Heart right ventricle (tissue), 16 donors: ENCODE measurements at regions of chr13 and their contacts with region 1.

Region 1: GRCh38 chr13:27362064-27362883 is 62.1 kb upstream of the GTF3A start:
- DNase-seq: peak; percentile 82 to 88
- ATAC-seq: peak; percentile 92 to 97 (median 95)
- H3K4me3 ChIP-seq: peak overlapping the region; percentile 29 to 61 (median 51)
- H3K27ac ChIP-seq: no peak overlapping the region
- H3K4me1 ChIP-seq: peaks cover 0 to 10% (median 5%) of the 10 kb centered on the region in 9 donors
- H3K27me3 ChIP-seq: peaks cover 0 to 17% (median 6%) of the 10 kb centered on the region in 7 donors
- CTCF ChIP-seq: peak; percentile 87 to 97 (median 95)

Region 2: GRCh38 chr13:26325876-26326275 is 1036.4 kb before region 1 on chr13:
- intact Hi-C with region 1: no loop called
- DNase-seq: no peak
- ATAC-seq: peak in 7 of 8 donors; percentile 34 to 80 (median 75)
- H3K4me3 ChIP-seq: no peak overlapping the region
- H3K27ac ChIP-seq: peak overlapping the region in 5 of 10 donors; percentile 27 to 61 (median 28)
- H3K4me1 ChIP-seq: peaks cover 3 to 53% (median 39%) of the 10 kb centered on the region in 9 donors
- H3K27me3 ChIP-seq: no peaks in the 10 kb centered on the region
- CTCF ChIP-seq: no peak

Region 3: GRCh38 chr13:26946684-26947343 is 415.5 kb before region 1 on chr13:
- intact Hi-C with region 1: loop called in 7 of 10 experiments (anchors 1 to 5 kb)
- DNase-seq: no peak
- ATAC-seq: peak in 7 of 8 donors; percentile 65 to 84 (median 72)
- H3K4me3 ChIP-seq: no peak overlapping the region
- H3K27ac ChIP-seq: no peak overlapping the region
- H3K4me1 ChIP-seq: peaks cover 0 to 14% (median 0%) of the 10 kb centered on the region in 9 donors
- H3K27me3 ChIP-seq: no peaks in the 10 kb centered on the region
- CTCF ChIP-seq: peak; percentile 65 to 82 (median 76)

Region 4: DNA sequence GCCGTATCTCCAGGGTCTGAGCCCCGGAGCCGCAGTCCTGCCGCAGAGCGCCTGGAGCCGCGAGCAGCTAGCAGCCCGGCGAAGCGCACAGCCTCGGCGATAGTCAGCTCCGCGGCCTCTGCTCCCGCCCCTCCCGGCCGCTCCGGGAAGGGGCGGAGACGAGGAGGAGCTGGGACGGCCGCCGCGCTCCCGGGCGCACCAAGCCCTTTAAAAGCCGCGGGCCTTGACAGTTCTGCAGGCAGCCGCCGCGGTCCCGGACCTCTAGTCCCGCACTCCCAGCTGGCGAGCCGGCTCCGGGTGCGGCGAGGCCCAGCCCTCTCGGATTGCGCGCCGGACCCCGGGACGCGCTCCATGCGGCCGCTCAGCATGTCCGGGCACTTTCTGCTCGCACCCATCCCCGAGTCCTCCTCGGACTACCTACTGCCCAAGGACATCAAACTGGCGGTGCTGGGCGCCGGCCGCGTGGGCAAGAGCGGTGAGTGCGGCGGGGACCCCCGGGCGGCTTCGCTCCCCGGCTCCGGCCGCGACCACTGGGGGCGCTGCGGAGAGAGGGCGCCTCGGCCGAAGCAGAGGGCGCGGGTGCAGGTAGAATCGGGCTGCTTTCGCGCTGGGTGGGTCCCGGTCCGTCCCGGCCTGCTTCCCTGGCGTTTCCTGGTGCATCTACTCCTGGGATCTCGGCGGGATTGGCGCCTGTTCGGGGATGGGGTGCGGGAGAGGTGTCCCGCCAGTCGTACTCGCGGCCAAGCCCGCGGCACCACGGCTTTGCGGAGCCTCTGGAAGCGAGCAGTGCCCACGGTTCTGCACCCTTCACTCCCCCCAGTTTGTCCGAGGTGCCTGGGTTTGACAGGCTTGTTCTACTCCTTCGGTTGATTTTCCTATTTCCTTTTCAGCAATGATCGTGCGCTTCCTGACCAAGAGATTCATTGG is 91.4 kb before region 1 on chr13 and contains the start of gene RASL11A:
- intact Hi-C with region 1: loop called in 1 of 10 experiments (anchors 10 kb)
- DNase-seq: peak; percentile 85 to 90
- ATAC-seq: peak; percentile 93 to 95 (median 94)
- H3K4me3 ChIP-seq: peak within 1 kb of the TSS; percentile 50 to 91 (median 78)
- H3K27ac ChIP-seq: peak within 1 kb of the TSS; percentile 79 to 95 (median 92)
- H3K4me1 ChIP-seq: peaks cover 0 to 68% (median 33%) of the 10 kb centered on the region in 9 donors
- H3K27me3 ChIP-seq: no peaks in the 10 kb centered on the region
- CTCF ChIP-seq: peak; percentile 91 to 99 (median 97)
- total RNA-seq, gene RASL11A: 1.8 to 68.7 (median 3.1) TPM

Region 5: DNA sequence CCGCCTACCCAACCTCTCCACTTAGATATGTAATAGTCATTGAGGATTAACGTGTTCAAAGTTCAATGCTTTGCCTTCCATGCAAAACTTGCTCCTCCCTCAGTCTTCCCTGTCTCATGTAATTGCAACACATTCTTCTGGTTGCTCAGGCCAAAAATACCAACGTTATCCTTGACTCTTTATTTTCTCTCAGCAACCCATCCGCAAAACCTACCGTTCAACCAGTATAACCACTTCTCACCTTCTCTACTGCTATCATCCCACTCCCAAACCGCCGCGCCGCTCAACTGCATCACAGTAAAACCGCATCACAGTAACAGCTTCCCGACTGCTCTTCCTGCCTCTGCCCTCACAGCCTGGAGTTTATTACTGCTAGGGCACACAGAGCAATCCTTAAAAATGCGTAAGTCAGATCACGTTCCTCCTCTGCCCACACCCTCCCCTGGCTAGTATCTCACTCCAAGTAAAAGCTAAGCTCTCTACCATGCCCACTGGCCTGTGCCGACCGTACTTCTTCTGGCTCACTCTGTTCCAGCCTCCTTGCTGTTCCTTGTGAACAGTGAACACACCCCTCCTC is 79.9 kb after region 1 on chr13:
- intact Hi-C with region 1: no loop called
- DNase-seq: no peak
- ATAC-seq: peak in 4 of 8 donors; percentile 10 to 55 (median 32)
- H3K4me3 ChIP-seq: no peak overlapping the region
- H3K27ac ChIP-seq: no peak overlapping the region
- H3K4me1 ChIP-seq: peaks cover 0 to 43% (median 27%) of the 10 kb centered on the region in 9 donors
- H3K27me3 ChIP-seq: no peaks in the 10 kb centered on the region
- CTCF ChIP-seq: no peak

Region 6: GRCh38 chr13:27728271-27728670 is 366.0 kb after region 1 on chr13:
- intact Hi-C with region 1: loop called in 1 of 10 experiments (anchors 10 kb)
- DNase-seq: no peak
- ATAC-seq: no peak
- H3K4me3 ChIP-seq: no peak overlapping the region
- H3K27ac ChIP-seq: no peak overlapping the region
- H3K4me1 ChIP-seq: no peaks in the 10 kb centered on the region
- H3K27me3 ChIP-seq: peaks cover 0 to 16% (median 3%) of the 10 kb centered on the region in 7 donors
- CTCF ChIP-seq: no peak

Region 7: DNA sequence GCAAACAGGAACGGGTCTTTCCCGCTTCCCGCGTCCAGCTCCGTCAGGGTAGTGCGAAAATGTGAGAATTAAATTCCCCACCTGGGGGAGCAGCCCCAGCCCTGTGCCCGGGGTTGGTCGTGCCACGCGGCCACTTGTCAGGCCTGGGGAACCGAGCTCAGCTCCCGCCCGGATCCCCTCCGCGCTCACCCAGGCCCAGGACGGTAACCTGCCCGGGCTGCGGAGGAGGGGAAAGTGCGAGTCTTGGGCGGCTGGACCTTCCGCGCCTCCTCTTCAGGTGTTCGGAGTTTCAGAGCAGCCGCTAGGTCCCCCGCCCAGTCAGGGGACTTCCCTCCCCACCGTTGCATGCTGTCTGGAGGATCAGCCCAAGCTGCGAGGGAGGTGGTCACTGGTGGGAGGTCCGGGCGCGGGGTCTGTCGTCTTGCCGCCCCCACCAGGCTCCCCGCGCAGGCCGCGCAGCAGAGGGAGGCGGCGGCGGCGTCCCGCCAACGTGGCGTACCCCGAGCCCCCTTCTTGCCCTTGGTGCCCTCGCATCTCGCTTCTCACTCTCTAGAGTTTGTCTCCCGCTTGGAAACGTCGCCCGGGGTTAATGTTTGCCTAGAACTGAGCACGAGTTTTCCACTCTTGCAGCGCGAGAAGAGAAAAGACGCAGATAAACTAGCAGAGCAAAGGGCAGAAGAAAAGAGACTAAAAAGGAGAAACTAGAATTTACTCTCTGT is 618.2 kb after region 1 on chr13:
- intact Hi-C with region 1: loop called in 8 of 10 experiments (anchors 1 to 5 kb)
- DNase-seq: no peak
- ATAC-seq: no peak
- H3K4me3 ChIP-seq: no peak overlapping the region
- H3K27ac ChIP-seq: no peak overlapping the region
- H3K4me1 ChIP-seq: peaks cover 0 to 37% (median 26%) of the 10 kb centered on the region in 9 donors
- H3K27me3 ChIP-seq: peaks cover 64 to 99% (median 97%) of the 10 kb centered on the region in 7 donors
- CTCF ChIP-seq: no peak